A549 (cell line): ENCODE measurements at regions of chr2 and their contacts with region 1.

Region 1: GRCh38 chr2:177164584-177165052 is 48.0 kb upstream of the HNRNPA3 start:
- DNase-seq: peak; percentile 49 to 82
- ATAC-seq: peak; percentile 45 to 70; a peak in 4 of 6 replicates
- H3K4me3 ChIP-seq: peak overlapping the region; percentile 34
- H3K27ac ChIP-seq: peak overlapping the region; percentile 95 to 98
- H3K4me1 ChIP-seq: peaks cover 45% of the 10 kb centered on the region
- CTCF ChIP-seq: peak; percentile 99
- EP300 ChIP-seq: no peak
- POLR2A ChIP-seq: no peak
- RAD21 ChIP-seq: peak; percentile 99 to 100

Region 2: DNA sequence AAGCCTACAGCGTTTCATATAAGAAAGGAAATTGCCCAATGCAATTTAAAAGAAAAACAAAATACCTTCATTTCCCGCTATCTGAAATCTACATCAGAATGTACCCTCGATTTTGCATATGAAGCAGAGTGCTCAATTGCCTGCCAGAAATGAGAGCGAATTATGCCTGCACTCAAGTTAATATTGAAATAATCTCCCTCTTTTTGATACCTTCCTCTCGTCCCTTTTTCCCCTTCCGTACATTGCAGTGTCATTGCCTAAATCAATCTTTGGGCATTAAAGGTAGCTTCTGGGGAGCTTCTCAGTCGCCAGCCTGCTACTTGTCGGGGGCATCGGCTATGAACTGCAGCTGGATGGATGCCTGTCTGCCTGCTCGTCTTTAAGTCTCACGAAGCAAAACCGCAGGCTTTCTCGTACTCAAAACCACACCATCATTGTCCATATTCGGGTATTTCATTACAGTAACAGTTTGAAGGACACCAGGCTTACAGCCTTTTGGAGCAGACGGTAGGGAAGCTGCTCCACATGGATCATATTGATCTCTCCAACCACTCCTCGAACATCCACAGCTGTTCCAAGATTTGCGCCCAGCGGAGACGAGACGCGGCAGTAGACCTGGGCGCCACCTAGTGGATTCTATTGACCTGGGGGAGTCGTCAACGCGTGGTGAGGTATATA is 16.0 kb before region 1 on chr2:
- CTCF ChIA-PET with region 1: interaction called, 25 read pairs
- POLR2A ChIA-PET with region 1: no interaction called
- DNase-seq: peak; percentile 61 to 75
- ATAC-seq: peak; percentile 99
- H3K4me3 ChIP-seq: peak overlapping the region; percentile 48
- H3K27ac ChIP-seq: no peak overlapping the region
- H3K4me1 ChIP-seq: peaks cover 9% of the 10 kb centered on the region; the same call in 1 of the 3 replicates
- CTCF ChIP-seq: peak; percentile 85
- EP300 ChIP-seq: no peak
- POLR2A ChIP-seq: no peak
- RAD21 ChIP-seq: peak; percentile 63 to 68

Region 3: DNA sequence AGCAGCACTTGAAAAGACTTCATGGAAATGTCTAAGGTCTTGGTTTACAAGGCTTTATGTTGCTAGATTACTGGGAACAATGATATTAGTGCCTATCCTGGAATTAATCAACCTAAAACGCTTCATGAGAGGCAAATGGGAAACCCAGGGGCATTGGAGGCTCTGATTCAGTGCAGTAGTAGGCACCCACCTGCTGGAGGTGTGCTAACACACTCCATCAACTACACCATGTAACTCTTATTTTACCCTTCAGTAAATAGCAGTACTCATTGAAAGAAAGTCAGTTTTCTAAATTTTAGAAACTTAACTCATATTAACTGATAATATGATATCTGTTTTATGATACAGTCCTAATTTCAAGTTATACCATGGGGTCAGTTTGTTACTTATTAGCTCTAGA is 30.6 kb after region 1 on chr2:
- CTCF ChIA-PET with region 1: interaction called, 15 read pairs
- POLR2A ChIA-PET with region 1: no interaction called
- DNase-seq: no peak
- ATAC-seq: peak; percentile 77; a peak in 5 of 6 replicates
- H3K4me3 ChIP-seq: no peak overlapping the region
- H3K27ac ChIP-seq: no peak overlapping the region
- H3K4me1 ChIP-seq: no peaks in the 10 kb centered on the region
- CTCF ChIP-seq: no peak
- EP300 ChIP-seq: no peak
- POLR2A ChIP-seq: no peak
- RAD21 ChIP-seq: no peak

Region 4: DNA sequence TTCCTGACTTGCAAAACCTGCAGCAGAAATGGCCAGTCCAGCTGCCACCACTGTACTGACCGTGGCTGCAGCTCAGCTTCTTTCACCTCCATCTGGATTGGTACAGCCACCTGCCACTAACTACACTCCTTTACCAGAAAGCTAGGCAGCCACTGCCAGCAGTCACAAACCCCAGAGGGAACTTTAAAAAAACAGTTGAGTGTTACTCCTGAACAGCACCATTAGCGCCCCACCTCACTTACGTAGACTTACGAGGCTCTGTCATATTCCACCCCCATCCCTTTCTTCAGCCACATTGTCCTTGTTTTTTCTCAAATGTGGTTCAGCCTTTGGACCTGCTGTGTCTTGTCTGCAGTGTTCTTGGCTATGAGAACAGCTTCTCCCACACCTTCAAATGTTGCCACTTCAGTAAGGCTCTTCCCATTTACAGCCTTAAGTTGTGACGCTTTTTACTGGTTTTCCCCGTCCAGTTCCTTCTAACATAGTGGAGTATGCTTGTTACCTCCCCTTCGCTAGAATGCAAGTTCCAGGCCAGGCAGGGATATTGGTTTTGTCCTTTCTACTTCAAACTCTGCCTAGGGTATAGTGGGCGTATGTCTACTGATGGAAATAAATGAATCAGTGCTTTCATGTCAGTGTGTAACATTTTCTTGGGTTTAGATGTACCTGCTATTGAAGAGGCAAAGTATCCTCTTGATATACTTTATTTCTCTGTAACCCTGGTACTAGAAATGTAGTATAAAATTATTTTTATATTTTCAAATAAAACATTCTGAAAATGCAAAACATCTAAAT is 65.0 kb after region 1 on chr2:
- CTCF ChIA-PET with region 1: interaction called, 15 read pairs
- POLR2A ChIA-PET with region 1: interaction called, 4 read pairs
- DNase-seq: no peak
- ATAC-seq: peak; percentile 14 to 62
- H3K4me3 ChIP-seq: no peak overlapping the region
- H3K27ac ChIP-seq: peak overlapping the region in 1 of 2 experiments; percentile 22; a peak in 1 of 6 replicates
- H3K4me1 ChIP-seq: peaks cover 63% of the 10 kb centered on the region; the same call in 2 of the 3 replicates
- CTCF ChIP-seq: no peak
- EP300 ChIP-seq: no peak
- POLR2A ChIP-seq: no peak
- RAD21 ChIP-seq: no peak

Region 5: GRCh38 chr2:177263451-177264208 is 99.0 kb after region 1 on chr2:
- CTCF ChIA-PET with region 1: interaction called, 123 read pairs
- POLR2A ChIA-PET with region 1: interaction called, 48 read pairs
- DNase-seq: peak; percentile 69 to 99
- ATAC-seq: peak; percentile 65 to 72
- H3K4me3 ChIP-seq: peak overlapping the region; percentile 92
- H3K27ac ChIP-seq: peak overlapping the region; percentile 99 to 100
- H3K4me1 ChIP-seq: peaks cover 39% of the 10 kb centered on the region
- CTCF ChIP-seq: peak; percentile 80
- EP300 ChIP-seq: peak; percentile 72 to 85; a peak in 3 of 5 replicates
- POLR2A ChIP-seq: peak; percentile 24
- RAD21 ChIP-seq: peak; percentile 63 to 85

Region 6: DNA sequence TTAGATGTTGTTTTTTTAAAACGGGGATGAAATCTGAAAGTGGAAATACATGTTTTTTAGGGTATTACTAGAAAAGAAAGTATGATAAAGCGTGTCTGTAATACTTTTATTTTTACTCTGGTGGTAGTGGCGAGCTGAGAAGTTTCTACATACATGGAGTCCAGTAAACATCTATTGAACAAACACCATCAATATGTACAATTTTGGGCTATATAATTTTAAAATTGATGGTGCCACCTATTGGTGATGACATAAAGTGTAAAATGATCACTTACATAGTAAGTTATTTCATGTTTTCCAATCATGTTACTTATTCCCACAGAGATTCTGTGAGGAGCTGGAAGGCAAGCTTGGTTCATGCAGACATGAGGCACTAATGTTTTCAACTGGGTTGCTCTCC is 131.4 kb after region 1 on chr2:
- CTCF ChIA-PET with region 1: interaction called, 29 read pairs
- POLR2A ChIA-PET with region 1: no interaction called
- DNase-seq: peak; percentile 22 to 32
- ATAC-seq: peak; percentile 43 to 71; a peak in 4 of 6 replicates
- H3K4me3 ChIP-seq: no peak overlapping the region
- H3K27ac ChIP-seq: peak overlapping the region in 1 of 2 experiments; percentile 39; a peak in 2 of 6 replicates
- H3K4me1 ChIP-seq: peaks cover 8% of the 10 kb centered on the region
- CTCF ChIP-seq: peak; percentile 66
- EP300 ChIP-seq: no peak
- POLR2A ChIP-seq: no peak
- RAD21 ChIP-seq: peak; percentile 61 to 74

Region 7: GRCh38 chr2:177419274-177419673 is 254.7 kb after region 1 on chr2:
- CTCF ChIA-PET with region 1: interaction called, 16 read pairs
- POLR2A ChIA-PET with region 1: no interaction called
- DNase-seq: no peak
- ATAC-seq: no peak
- H3K4me3 ChIP-seq: no peak overlapping the region
- H3K27ac ChIP-seq: peak overlapping the region; percentile 35 to 63; a peak in 4 of 6 replicates
- H3K4me1 ChIP-seq: peaks cover 62% of the 10 kb centered on the region
- CTCF ChIP-seq: no peak
- EP300 ChIP-seq: no peak
- POLR2A ChIP-seq: no peak
- RAD21 ChIP-seq: no peak